ENCODE measurements at regions of chr7 and their contacts with region 1.

Region 1: DNA sequence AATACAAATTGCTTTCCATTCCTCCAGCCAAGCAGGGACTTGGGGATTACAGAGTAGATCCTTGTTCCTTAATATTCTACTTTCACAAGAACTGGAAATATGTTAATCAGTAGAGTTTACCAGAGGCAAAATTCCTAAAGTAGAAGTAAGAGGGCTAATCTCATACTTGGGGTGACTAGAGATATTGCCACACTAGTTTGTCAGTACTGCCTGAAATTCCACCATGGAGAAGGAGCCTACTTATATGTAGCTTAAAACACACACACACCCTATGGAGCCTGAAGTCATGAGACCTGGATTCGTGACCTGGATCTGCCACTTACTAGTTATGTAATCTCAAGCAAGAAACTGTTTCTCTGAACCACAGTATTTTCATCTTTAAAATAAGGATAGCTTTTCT is 33.9 kb downstream of the STRIP2 start:
- DNase-seq: no peak
- H3K4me3 Mint-ChIP-seq: no peak overlapping the region
- H3K27ac Mint-ChIP-seq: no peak overlapping the region
- H3K4me1 Mint-ChIP-seq: peaks cover 13% of the 10 kb centered on the region
- H3K27me3 Mint-ChIP-seq: no peaks in the 10 kb centered on the region

Region 2: GRCh38 chr7:129315960-129316359 is 152.1 kb before region 1 on chr7:
- CTCF ChIA-PET with region 1: no interaction called
- POLR2A ChIA-PET with region 1: no interaction called
- intact Hi-C with region 1: no loop called
- DNase-seq: no peak
- H3K4me3 Mint-ChIP-seq: no peak overlapping the region
- H3K27ac Mint-ChIP-seq: no peak overlapping the region
- H3K4me1 Mint-ChIP-seq: no peaks in the 10 kb centered on the region
- H3K27me3 Mint-ChIP-seq: no peaks in the 10 kb centered on the region

Region 3: DNA sequence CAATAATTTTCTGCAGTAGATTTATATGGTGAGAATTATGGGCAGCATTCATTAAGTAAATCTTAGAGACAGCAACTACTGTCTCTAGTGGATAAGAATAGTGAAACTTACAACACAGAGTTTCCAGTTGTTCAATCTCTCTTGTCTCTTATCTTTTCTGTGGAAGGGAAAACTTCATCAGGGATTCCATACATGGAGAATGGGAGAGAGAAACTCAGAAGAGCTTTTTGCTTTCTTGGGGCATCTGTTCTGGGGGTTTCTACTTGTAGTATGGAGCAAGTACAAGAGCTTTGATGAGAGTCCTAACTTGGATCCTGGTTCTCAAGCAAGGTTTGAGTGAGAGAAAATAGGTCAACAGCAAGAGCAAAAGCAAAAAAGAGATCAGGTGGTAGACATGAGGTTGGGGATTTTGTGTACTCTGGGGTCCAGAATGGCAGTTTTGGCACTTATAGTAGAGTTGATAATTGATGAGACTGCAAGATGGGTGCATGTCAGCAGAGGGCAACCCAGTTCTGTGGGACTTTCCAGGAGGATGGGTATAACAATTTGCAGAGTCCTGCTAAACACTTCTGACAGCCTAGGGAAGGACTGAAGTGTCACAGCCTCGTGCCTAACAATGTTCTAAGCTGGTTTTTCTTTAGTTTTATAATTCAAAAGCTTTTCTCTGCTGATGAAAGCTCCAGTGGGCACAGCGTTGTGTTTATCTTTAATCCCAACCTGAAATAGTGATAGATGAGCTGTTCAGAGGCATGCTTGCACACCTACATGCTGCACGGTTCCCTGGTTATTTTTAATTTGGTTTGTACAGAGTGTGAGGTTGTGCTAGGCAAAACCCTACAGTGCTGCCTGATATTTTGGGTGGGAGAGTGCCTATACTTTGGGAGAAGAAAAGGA is 65.9 kb before region 1 on chr7:
- CTCF ChIA-PET with region 1: interaction called, 17 read pairs
- POLR2A ChIA-PET with region 1: no interaction called
- intact Hi-C with region 1: loop called (anchors 1 kb)
- DNase-seq: peak; percentile 56
- H3K4me3 Mint-ChIP-seq: no peak overlapping the region
- H3K27ac Mint-ChIP-seq: peak overlapping the region; percentile 29
- H3K4me1 Mint-ChIP-seq: peaks cover 37% of the 10 kb centered on the region
- H3K27me3 Mint-ChIP-seq: no peaks in the 10 kb centered on the region

Region 4: GRCh38 chr7:129530795-129531391 is 62.8 kb after region 1 on chr7:
- CTCF ChIA-PET with region 1: no interaction called
- POLR2A ChIA-PET with region 1: no interaction called
- intact Hi-C with region 1: no loop called
- DNase-seq: peak; percentile 86
- H3K4me3 Mint-ChIP-seq: no peak overlapping the region
- H3K27ac Mint-ChIP-seq: peak overlapping the region; percentile 19
- H3K4me1 Mint-ChIP-seq: peaks cover 9% of the 10 kb centered on the region
- H3K27me3 Mint-ChIP-seq: peaks cover 11% of the 10 kb centered on the region